WTC11 (cell line): ENCODE measurements at regions of chr7 and their contacts with region 1.

Region 1: GRCh38 chr7:24069751-24070150 is 214.2 kb upstream of the NPY start:
- DNase-seq: no peak
- ATAC-seq: no peak
- H3K4me3 Mint-ChIP-seq: no peak overlapping the region
- H3K27ac Mint-ChIP-seq: no peak overlapping the region
- H3K4me1 Mint-ChIP-seq: peaks cover 2% of the 10 kb centered on the region; the same call in 1 of the 2 replicates
- H3K27me3 Mint-ChIP-seq: no peaks in the 10 kb centered on the region
- CTCF ChIP-seq: no peak

Region 2: GRCh38 chr7:24057243-24057642 is 12.5 kb before region 1 on chr7:
- CTCF ChIA-PET with region 1: interaction called, 11 read pairs
- POLR2A ChIA-PET with region 1: no interaction called
- DNase-seq: no peak
- ATAC-seq: no peak
- H3K4me3 Mint-ChIP-seq: no peak overlapping the region
- H3K27ac Mint-ChIP-seq: no peak overlapping the region
- H3K4me1 Mint-ChIP-seq: peaks cover 19% of the 10 kb centered on the region
- H3K27me3 Mint-ChIP-seq: peaks cover 4% of the 10 kb centered on the region; the same call in 1 of the 2 replicates
- CTCF ChIP-seq: 0 out of 2 replicates have a peak, but pooled peaks have one; percentile 30

Region 3: GRCh38 chr7:24115661-24116060 is 45.9 kb after region 1 on chr7:
- CTCF ChIA-PET with region 1: no interaction called
- POLR2A ChIA-PET with region 1: no interaction called
- DNase-seq: no peak
- ATAC-seq: no peak
- H3K4me3 Mint-ChIP-seq: no peak overlapping the region
- H3K27ac Mint-ChIP-seq: no peak overlapping the region
- H3K4me1 Mint-ChIP-seq: peaks cover 5% of the 10 kb centered on the region
- H3K27me3 Mint-ChIP-seq: no peaks in the 10 kb centered on the region
- CTCF ChIP-seq: no peak